Thyroid gland (tissue), 4 donors: ENCODE measurements at regions of chr3 and their contacts with region 1.

Region 1: DNA sequence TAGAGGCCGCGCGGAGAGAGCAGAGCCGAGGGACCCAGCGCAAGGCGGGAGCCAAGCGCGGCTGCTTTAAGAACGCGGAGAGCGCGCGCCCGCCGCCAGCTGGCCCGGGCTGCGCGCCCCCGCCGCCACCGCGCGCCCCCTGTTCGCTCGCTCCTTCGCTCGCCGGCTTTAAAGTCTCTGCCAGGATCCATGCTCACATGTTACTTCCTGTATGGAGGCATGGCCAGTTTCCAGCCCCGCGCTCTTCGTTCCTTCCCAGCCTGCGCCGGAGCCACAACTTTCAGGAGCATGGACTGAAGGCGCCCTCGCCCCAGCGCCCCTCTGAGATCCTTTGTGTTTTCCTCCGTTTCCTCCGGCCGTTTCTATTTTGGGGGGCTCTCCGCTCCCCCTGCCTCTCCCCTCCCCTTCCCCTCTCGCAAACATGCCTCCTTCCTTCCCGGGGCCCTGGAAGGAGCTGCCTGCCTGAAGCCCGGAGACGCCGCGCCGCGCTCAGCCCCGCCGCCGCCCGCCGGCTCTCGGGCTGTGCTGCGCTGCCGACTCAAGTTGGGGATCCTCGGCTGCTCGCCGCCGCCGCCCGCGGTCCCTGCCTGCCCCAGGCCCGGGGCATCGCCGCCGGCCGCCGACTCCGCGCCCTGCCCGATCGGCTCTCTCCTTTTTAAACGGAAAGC is at the start of gene PTPRG:
- DNase-seq: peak; percentile 91 to 92
- H3K4me3 ChIP-seq: peak within 1 kb of the TSS; percentile 80 to 92 (median 80)
- H3K27ac ChIP-seq: peak within 1 kb of the TSS; percentile 95 to 98 (median 97)
- H3K4me1 ChIP-seq: peaks cover 13 to 17% of the 10 kb centered on the region in 2 donors
- H3K27me3 ChIP-seq: no peaks in the 10 kb centered on the region
- CTCF ChIP-seq: no peak
- POLR2A ChIP-seq: peak in 1 of 2 donors; percentile 92
- total RNA-seq, gene PTPRG: 81.6 to 207 (median 132) TPM

Region 2: DNA sequence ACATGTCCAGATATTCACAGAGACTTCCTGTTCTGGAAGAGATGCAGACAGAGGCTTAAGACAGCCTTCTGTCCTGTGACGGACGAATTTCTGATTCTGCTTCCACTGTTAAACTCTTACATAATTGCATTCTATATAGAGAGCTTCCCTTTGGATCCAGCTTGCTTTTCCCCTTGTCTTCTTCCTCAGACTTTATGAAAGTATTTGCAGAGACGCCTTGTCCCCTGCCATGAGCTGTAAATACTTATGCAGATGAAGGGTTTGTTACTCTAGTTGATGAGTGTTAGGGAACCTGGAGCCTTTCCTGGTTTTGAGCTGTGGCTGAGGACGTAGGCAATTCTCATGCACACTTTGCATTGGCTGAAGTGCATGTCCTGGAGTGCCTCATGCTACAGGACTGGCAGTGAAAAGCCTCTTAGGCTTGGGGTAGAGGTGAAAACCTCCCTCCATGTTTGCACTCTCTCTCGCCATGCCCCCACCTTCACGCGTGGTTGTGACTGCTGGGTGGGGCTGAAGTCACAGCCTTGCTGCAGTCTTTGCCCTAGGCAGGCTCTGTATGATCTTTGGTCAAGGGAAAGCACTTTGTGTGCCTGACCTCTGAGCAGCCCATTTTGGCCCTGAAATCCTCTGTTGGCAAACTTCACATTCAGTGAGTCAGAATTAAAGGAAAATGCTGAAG is 286.4 kb after region 1 on chr3:
- intact Hi-C with region 1: loop called (anchors 10 kb)
- DNase-seq: peak; percentile 44 to 52
- H3K4me3 ChIP-seq: no peak overlapping the region
- H3K27ac ChIP-seq: peak overlapping the region; percentile 14 to 82 (median 72)
- H3K4me1 ChIP-seq: peaks cover 31 to 53% of the 10 kb centered on the region in 2 donors
- H3K27me3 ChIP-seq: no peaks in the 10 kb centered on the region
- CTCF ChIP-seq: no peak
- POLR2A ChIP-seq: no peak

Region 3: DNA sequence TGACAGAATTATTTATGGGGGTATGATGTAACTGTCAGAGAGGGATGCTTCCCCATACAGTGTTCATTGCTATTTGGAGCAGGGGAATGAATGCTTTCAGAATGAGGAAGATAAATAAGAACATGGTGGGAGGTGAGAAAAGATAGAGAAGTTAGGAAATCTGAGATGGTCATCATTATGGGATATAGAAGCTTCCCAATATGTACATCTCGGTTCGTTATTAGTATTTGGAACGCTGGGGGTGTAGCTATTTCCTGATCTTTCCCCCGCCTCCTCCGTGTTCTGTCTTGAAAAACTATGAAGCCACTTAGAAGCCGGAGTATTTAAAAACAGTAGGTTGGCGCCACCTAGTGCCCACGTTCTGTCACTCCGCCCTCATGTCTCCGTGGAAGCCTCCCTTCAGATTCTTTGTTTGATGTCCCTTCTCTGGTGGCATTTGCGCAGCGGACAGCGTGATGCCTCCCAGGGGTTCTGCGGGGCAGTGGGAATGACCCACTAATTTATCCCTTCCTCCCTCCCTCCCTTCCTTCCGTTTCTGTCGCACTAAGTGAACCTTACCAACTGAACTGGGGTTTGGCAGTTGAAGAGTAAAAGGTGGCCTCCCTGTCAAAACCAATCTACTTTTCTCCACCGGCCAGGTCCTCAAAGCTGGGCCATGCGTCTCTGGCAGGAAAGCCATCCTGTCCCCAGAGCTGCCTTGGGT is 627.3 kb after region 1 on chr3:
- intact Hi-C with region 1: loop called (anchors 5 kb)
- DNase-seq: peak; percentile 74 to 76
- H3K4me3 ChIP-seq: no peak overlapping the region
- H3K27ac ChIP-seq: no peak overlapping the region
- H3K4me1 ChIP-seq: peaks cover 0 to 9% of the 10 kb centered on the region in 2 donors
- H3K27me3 ChIP-seq: no peaks in the 10 kb centered on the region
- CTCF ChIP-seq: peak; percentile 17 to 86 (median 76)
- POLR2A ChIP-seq: no peak